Activated CD4-positive, alpha-beta memory T cell treated with anti-CD3 and anti-CD28 coated beads, Interleukin-2, amount 10 ng/mL, durations not matched to agents 7 days and 5 days (primary cell): ENCODE measurements at regions of chr1 and their contacts with region 1.

Region 1: GRCh38 chr1:181936768-181937581 is 124.5 kb downstream of the ZNF648 start:
- DNase-seq: peak; percentile 44
- H3K4me3 Mint-ChIP-seq: no peak overlapping the region
- H3K27ac Mint-ChIP-seq: no peak overlapping the region
- H3K4me1 Mint-ChIP-seq: peaks cover 1% of the 10 kb centered on the region
- H3K27me3 Mint-ChIP-seq: no peaks in the 10 kb centered on the region

Region 2: GRCh38 chr1:181479137-181479745 is 457.7 kb before region 1 on chr1:
- CTCF ChIA-PET with region 1: interaction called, 13 read pairs
- POLR2A ChIA-PET with region 1: no interaction called
- DNase-seq: peak; percentile 29
- H3K4me3 Mint-ChIP-seq: no peak overlapping the region
- H3K27ac Mint-ChIP-seq: no peak overlapping the region
- H3K4me1 Mint-ChIP-seq: peaks cover 7% of the 10 kb centered on the region
- H3K27me3 Mint-ChIP-seq: peaks cover 42% of the 10 kb centered on the region